ENCODE measurements at regions of chr1 and their contacts with region 1.

Region 1: GRCh38 chr1:182781841-182782586 is 7.6 kb upstream of the NPL start:
- DNase-seq: peak; percentile 79
- ATAC-seq: peak; percentile 79
- H3K4me3 Mint-ChIP-seq: no peak overlapping the region
- H3K27ac Mint-ChIP-seq: no peak overlapping the region
- H3K4me1 Mint-ChIP-seq: peaks cover 18% of the 10 kb centered on the region
- H3K27me3 Mint-ChIP-seq: peaks cover 4% of the 10 kb centered on the region
- CTCF ChIP-seq: peak; percentile 63

Region 2: GRCh38 chr1:182622901-182623528 is 159.0 kb before region 1 on chr1:
- CTCF ChIA-PET with region 1: interaction called, 10 read pairs
- POLR2A ChIA-PET with region 1: no interaction called
- DNase-seq: no peak
- ATAC-seq: peak; percentile 50
- H3K4me3 Mint-ChIP-seq: no peak overlapping the region
- H3K27ac Mint-ChIP-seq: no peak overlapping the region
- H3K4me1 Mint-ChIP-seq: peaks cover 32% of the 10 kb centered on the region
- H3K27me3 Mint-ChIP-seq: peaks cover 9% of the 10 kb centered on the region
- CTCF ChIP-seq: no peak

Region 3: DNA sequence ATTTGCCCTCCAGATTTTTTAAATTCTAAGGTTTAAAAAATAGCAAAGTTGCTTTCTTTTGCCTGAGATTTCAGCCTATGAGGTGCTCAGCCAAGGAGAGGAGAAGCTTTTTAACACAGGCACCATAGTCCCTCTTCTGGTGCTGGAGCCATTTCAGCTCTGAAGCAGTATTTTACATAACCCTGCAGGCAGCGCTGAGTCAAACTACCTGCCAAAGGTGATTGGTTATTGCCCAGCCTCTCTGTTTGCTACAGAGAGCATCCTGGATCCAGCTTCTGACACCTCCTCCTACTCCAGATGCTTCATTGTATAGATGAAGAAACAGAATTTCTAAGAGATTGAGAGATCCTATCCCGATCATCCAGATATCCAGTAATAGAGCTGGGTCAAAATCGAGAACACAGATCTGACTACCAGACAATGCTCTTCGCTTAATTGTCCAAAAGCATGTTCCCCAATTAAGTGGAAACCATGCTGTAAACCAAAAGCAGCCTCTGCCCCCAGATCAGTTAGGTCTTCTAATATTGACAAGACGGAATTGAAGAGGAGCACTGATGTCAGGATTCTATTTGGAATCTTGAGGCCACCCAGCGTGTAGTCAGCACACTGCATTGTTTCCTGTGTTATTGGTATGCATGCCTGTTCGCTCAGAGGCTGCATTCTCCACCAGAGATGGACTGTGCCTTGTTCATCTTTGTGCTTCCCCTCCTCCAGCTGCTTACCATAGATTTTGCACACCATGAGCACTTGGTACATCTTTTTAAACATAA is 119.7 kb before region 1 on chr1:
- CTCF ChIA-PET with region 1: interaction called, 32 read pairs
- POLR2A ChIA-PET with region 1: no interaction called
- DNase-seq: peak; percentile 31
- ATAC-seq: peak; percentile 79
- H3K4me3 Mint-ChIP-seq: peak overlapping the region; percentile 34
- H3K27ac Mint-ChIP-seq: peak overlapping the region; percentile 71
- H3K4me1 Mint-ChIP-seq: peaks cover 60% of the 10 kb centered on the region
- H3K27me3 Mint-ChIP-seq: peaks cover 19% of the 10 kb centered on the region
- CTCF ChIP-seq: no peak

Region 4: DNA sequence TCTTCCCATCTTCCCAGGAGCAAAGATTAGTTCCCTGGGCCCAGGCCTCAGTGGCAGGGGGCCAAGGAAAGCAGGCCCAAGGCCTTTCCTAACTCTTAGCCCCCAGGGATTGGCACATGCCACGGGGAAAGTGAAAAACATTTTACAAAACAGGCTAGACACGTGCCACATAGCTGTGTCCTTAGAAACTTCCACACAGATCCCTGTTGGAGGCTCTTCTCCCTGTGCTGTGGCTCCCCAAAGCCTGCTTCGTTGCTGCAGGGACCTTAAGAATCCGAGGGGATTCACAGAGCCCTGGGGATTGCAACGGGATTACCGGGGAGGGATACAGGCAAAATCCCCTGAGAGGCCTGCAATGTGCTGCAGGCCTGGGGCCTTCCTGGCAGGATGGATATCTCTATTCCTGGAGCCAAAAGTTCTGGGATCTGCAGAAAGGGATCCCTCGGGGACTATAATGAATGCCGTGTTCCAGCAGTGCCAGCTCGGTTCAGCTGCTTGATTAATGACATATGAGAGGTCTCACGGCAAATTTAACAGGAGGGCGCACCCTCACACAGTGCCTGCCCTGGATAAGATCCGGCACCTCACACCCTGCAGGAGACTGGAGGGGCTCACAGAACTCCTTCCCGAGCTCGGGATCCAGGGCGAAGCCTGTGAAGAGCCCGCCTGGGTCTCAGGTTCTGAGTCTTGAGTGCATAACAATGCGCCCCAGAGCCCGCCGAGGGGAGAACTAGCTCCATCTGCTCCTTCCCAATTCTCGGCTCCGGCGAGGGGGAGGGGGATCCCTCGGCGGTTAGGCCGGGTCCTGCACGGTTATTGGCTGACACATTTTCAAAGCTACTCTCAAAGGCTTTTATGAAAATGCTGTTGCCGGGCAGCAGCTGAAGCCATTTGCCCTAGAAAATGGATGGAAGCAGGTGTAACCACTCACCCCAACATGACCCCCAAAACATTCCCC is 82.3 kb before region 1 on chr1:
- CTCF ChIA-PET with region 1: interaction called, 96 read pairs
- POLR2A ChIA-PET with region 1: interaction called, 3 read pairs
- DNase-seq: peak; percentile 88
- ATAC-seq: peak; percentile 93
- H3K4me3 Mint-ChIP-seq: peak overlapping the region; percentile 65
- H3K27ac Mint-ChIP-seq: peak overlapping the region; percentile 95
- H3K4me1 Mint-ChIP-seq: peaks cover 74% of the 10 kb centered on the region
- H3K27me3 Mint-ChIP-seq: peaks cover 3% of the 10 kb centered on the region; the same call in 1 of the 2 replicates
- CTCF ChIP-seq: no peak

Region 5: GRCh38 chr1:182765391-182765790 is 16.6 kb before region 1 on chr1:
- CTCF ChIA-PET with region 1: interaction called, 14 read pairs
- POLR2A ChIA-PET with region 1: no interaction called
- DNase-seq: no peak
- ATAC-seq: no peak
- H3K4me3 Mint-ChIP-seq: no peak overlapping the region
- H3K27ac Mint-ChIP-seq: no peak overlapping the region
- H3K4me1 Mint-ChIP-seq: peaks cover 23% of the 10 kb centered on the region
- H3K27me3 Mint-ChIP-seq: no peaks in the 10 kb centered on the region
- CTCF ChIP-seq: no peak

Region 6: DNA sequence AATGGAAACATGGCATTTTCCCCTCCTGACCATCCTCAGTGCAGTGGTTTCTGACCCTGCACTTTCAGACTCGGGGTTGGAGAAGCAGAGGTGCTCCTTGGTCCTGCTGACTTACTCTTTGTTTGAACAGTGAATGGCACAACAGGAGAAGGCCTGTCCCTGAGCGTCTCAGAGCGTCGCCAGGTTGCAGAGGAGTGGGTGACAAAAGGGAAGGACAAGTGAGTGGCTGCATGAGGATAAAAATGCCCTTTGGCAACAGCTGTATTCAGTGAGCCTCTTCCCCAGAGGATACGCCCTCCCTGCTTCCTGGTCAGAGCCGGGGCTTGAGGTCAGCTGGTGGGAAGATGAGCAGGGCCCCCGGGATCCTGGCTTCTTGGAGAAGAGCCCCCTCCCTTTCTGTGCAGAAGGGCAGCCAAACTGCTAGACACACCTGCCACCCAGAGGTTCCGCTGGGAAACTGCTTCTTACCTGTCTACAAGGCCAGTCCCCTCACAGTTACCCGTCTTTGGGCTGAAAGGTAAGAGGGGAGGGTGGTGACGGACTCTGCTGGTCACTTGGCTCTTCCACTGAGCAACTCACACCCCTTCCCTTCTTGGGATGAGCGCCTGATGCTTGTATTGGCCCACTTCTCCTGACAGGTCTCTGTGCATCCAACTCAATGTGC is 24.1 kb after region 1 on chr1:
- CTCF ChIA-PET with region 1: interaction called, 15 read pairs
- POLR2A ChIA-PET with region 1: no interaction called
- DNase-seq: peak; percentile 82
- ATAC-seq: peak; percentile 98
- H3K4me3 Mint-ChIP-seq: no peak overlapping the region; the same call in 1 of the 2 replicates
- H3K27ac Mint-ChIP-seq: no peak overlapping the region
- H3K4me1 Mint-ChIP-seq: peaks cover 18% of the 10 kb centered on the region
- H3K27me3 Mint-ChIP-seq: no peaks in the 10 kb centered on the region
- CTCF ChIP-seq: no peak

Region 7: DNA sequence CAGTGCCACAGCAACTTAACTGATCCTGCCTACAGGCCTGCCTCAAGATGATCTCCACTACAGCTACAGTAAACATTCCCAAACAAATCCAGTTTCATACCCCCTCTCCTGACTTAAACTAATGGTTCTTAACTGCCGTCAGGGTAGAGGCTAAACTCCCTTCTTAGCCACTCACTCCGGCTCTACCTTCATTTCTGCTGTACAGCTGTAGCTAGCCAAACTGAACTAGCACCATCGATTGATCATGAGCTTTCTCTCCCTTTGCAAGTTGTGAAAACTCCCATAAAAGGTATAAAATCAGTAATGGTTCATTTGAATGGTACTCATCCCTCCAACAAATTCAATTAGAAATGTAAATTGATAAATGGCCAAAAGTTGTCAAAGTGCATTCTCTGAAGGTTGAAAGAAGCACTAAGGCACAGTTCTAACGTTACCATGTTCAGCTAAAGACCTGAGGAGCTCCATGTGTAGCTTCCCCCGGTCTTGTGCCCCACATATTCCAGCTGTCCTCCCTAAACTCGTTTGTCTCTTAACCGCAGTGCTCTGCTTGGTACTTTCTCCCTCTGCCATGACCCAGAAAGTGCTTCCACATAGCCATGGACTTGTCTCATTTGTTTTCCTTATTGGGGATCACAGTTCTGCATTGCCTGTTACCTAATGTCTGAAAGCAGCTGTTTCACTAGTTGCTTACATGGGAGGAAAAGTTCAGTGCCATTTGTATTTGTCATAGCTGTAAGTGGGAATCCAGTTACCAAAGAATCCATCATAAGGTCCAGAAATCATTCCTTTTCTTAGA is 106.9 kb after region 1 on chr1:
- CTCF ChIA-PET with region 1: no interaction called
- POLR2A ChIA-PET with region 1: no interaction called
- DNase-seq: no peak
- ATAC-seq: peak; percentile 10; the same call in 1 of the 2 replicates
- H3K4me3 Mint-ChIP-seq: no peak overlapping the region
- H3K27ac Mint-ChIP-seq: peak overlapping the region; percentile 81
- H3K4me1 Mint-ChIP-seq: peaks cover 12% of the 10 kb centered on the region
- H3K27me3 Mint-ChIP-seq: no peaks in the 10 kb centered on the region
- CTCF ChIP-seq: no peak